ENCODE measurements at regions of chr20 and their contacts with region 1.

Region 1: DNA sequence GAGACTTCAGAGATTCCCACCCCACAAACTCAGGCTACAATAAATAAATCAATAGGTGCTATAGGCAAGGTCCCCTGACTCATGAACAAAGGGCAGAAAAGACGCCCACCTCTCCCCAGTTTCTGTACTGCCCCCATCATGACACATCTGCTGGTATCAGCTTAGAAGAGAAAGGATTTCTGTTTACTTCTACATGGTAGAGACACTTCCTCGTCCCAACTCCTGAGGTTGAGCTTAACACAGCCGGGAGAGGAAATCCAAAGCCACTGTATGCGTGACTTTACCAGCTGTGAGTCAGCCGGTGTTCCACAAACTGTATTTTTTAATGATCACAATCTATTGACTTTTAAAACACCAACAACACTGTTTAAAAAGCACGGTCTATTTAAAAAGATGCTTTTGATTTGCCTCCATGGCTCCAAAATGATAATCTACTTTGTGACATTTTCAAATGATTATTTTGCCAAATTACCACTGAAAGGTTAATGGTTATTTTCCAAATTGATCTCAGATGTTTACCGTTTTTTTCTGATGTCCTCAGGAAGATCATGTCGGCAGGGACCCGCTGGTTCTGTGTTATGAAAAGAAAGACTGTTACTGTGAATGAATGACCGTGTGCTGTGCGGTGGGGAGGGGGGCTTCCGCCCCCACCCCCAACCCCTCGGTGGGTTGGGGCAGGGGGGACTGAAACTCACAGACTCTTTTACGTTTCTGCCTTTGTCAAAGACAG is 72.5 kb downstream of the ATP9A start:
- DNase-seq: no peak
- H3K4me3 ChIP-seq: peak overlapping the region in 2 of 4 experiments; percentile 23 to 35; a peak in 2 of 8 replicates
- H3K27ac ChIP-seq: peak overlapping the region; percentile 23; the same call in 1 of the 2 replicates
- H3K4me1 ChIP-seq: peaks cover 9 to 22% (median 17%) of the 10 kb centered on the region in 4 experiments; a peak in 6 of 7 replicates
- H3K27me3 ChIP-seq: no peaks in the 10 kb centered on the region
- CTCF ChIP-seq: no peak
- EP300 ChIP-seq: no peak
- POLR2A ChIP-seq: no peak
- RAD21 ChIP-seq: no peak

Region 2: DNA sequence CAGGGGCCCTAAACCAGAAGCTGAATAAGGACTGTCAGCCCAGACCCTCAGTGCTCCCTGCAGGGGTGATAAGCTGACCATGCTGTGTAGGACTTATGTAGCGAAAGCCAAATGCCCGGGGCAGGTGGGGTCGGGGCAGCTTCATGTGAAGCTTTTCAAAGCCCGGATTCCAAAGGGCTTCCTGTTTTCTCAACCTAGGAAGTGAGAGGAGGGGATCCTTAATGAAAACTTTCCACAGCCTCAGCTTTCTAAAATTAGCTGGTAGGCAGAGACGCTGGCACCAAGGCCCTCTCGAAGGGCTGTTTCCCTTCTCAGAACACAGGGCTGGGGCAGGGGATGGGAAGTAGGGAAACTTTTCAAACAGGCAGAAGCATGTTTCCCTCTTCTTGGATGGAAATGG is 302.2 kb before region 1 on chr20:
- CTCF ChIA-PET with region 1: no interaction called
- POLR2A ChIA-PET with region 1: no interaction called
- DNase-seq: no peak
- H3K4me3 ChIP-seq: no peak overlapping the region
- H3K27ac ChIP-seq: no peak overlapping the region
- H3K4me1 ChIP-seq: peaks cover 2 to 16% (median 7%) of the 10 kb centered on the region in 4 experiments
- H3K27me3 ChIP-seq: no peaks in the 10 kb centered on the region
- CTCF ChIP-seq: no peak
- EP300 ChIP-seq: no peak
- POLR2A ChIP-seq: no peak
- RAD21 ChIP-seq: no peak

Region 3: GRCh38 chr20:51639206-51639832 is 56.4 kb before region 1 on chr20:
- CTCF ChIA-PET with region 1: interaction called, 15 read pairs
- POLR2A ChIA-PET with region 1: interaction called, 3 read pairs
- DNase-seq: peak; percentile 51 to 97
- H3K4me3 ChIP-seq: no peak overlapping the region
- H3K27ac ChIP-seq: no peak overlapping the region
- H3K4me1 ChIP-seq: no peaks in the 10 kb centered on the region
- H3K27me3 ChIP-seq: no peaks in the 10 kb centered on the region
- CTCF ChIP-seq: peak; percentile 77 to 98 (median 89)
- EP300 ChIP-seq: no peak
- POLR2A ChIP-seq: no peak
- RAD21 ChIP-seq: peak; percentile 97

Region 4: GRCh38 chr20:51712501-51713197 is 16.9 kb after region 1 on chr20:
- CTCF ChIA-PET with region 1: interaction called, 16 read pairs
- POLR2A ChIA-PET with region 1: no interaction called
- DNase-seq: peak in 1 of 2 experiments; percentile 76
- H3K4me3 ChIP-seq: no peak overlapping the region
- H3K27ac ChIP-seq: no peak overlapping the region
- H3K4me1 ChIP-seq: peaks cover 5 to 16% (median 11%) of the 10 kb centered on the region in 4 experiments
- H3K27me3 ChIP-seq: no peaks in the 10 kb centered on the region
- CTCF ChIP-seq: peak; percentile 66 to 76 (median 71)
- EP300 ChIP-seq: no peak
- POLR2A ChIP-seq: no peak
- RAD21 ChIP-seq: peak; percentile 54 to 56

Measured in H1 (cell line).